Heart right ventricle (tissue), 16 donors: ENCODE measurements at regions of chrX and their contacts with region 1.

Region 1: DNA sequence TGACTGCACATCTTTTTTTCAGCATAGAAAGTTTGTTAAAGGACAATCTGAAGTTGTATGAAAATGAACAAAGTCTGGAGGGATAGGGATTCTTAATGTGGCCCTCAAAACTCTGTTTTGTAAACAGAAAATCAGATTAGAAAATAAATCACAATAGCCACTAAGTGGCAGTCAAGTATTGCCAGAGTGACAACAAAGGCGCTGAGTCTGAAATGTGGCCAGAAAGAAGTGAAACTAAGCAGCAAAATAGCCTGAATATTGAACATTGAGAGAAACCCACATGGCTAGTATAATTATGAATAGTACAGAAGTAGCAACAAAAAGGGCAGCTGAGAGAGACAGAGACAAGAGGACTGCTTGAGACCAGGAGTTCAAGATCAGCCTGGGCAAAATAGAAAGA is 81.1 kb upstream of the CT45A1 start:
- DNase-seq: no peak
- ATAC-seq: no peak
- H3K4me3 ChIP-seq: no peak overlapping the region
- H3K27ac ChIP-seq: no peak overlapping the region
- H3K4me1 ChIP-seq: no peaks in the 10 kb centered on the region
- H3K27me3 ChIP-seq: peaks cover 0 to 14% (median 0%) of the 10 kb centered on the region in 7 donors
- CTCF ChIP-seq: peak in 1 of 9 donors; percentile 15

Region 2: DNA sequence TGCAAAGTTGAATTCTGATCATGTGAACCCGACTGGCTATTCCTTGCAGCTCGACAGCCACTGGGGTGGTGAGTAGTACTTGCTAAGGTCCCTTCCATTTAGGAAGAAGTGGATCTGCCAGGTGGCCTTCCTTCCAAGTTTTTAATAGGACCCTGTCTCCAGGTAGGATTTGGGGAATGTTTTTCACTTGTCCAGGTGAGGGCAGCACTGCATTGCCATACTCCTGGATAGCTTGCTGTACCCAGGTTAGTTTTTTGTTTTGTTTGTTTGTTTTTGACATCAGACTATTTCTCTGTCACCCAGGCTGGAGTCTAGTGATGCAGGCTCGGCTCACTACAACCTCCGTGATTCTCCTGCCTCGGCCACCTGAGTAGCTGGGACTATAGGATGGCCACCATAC is 291.0 kb after region 1 on chrX:
- intact Hi-C with region 1: loop called in 1 of 10 experiments (anchors 10 kb)
- DNase-seq: no peak
- ATAC-seq: no peak
- H3K4me3 ChIP-seq: no peak overlapping the region
- H3K27ac ChIP-seq: no peak overlapping the region
- H3K4me1 ChIP-seq: no peaks in the 10 kb centered on the region
- H3K27me3 ChIP-seq: peaks cover 0 to 31% (median 0%) of the 10 kb centered on the region in 7 donors
- CTCF ChIP-seq: peak in 1 of 9 donors; percentile 15

Region 3: DNA sequence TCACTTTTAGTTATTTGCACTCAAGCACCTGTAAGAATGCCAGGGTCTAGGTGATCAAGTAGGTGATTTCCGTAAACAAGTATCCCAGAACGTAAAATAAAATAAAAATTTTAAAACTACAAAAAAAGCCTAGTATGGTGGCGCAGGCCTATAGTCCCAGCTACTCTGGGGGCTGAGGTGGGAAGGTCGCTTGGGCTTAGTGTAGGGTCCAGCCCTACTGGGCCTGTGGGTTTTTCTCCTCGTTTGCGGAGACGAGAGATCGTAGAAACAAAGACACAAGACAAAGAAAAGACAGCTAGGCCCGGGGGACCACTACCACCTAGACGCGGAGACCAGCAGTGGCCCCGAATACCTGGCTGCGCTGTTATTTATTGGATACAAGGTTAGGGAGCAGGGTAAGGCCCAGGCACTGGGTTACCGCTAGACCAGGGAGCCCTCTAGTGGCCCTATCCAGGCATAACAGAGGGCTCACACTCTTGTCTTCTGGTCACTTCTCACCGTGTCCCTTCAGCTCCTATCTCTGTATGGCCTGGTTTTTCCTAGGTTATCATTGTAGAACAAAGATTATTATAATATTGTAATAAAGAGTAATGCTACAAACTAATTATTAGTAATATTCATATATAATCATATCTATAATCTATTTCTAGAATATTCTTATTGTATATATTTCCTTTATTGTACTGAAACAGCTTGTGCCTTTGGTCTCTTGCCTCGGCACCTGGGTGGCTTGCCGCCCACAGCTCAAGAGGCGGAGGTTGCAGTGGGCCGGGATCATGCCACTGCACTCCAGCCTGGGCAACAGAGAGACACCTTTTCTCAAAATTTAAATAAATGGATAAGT is 299.5 kb after region 1 on chrX:
- intact Hi-C with region 1: loop called in 3 of 10 experiments (anchors 2 to 10 kb)
- DNase-seq: peak; percentile 13 to 15
- ATAC-seq: peak in 3 of 8 donors; percentile 51 to 67 (median 62)
- H3K4me3 ChIP-seq: no peak overlapping the region
- H3K27ac ChIP-seq: no peak overlapping the region
- H3K4me1 ChIP-seq: no peaks in the 10 kb centered on the region
- H3K27me3 ChIP-seq: peaks cover 0 to 15% (median 0%) of the 10 kb centered on the region in 7 donors
- CTCF ChIP-seq: peak; percentile 19 to 80 (median 63)